ENCODE measurements at regions of chrX and their contacts with region 1.

Region 1: DNA sequence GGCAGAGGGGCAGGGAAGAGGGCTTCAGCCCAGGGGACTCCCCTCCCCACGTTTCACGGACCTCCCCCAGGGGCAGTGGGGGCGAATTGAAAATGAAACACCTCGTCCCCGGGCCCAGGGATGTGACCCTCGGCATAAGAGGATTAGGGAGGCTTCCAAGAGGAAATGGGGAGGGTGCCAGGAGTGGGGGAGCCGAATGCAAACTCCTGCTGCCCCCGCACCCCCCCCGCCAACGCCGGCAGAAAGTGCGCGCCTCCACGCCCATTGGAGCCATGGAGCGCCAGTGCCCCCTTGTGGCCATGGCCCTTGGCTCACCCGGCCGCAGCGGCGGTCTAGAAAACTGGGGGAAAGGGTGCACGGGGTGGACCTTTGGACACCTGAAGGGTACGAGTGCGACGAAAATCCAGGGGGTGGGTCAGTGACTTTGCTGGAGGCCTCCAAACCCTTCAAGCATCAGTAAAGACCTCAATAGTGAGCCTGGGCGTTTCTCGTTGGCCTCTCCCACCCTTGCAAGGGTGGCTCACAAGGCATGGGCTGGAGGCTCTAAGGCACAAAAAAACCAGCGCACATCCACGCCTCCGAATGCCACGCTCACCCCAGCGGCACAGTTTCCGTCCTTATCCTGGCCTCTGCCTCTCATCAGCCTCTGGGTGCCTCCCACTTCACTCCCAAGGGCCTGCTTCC is 120.8 kb upstream of the PJA1 start:
- DNase-seq: peak; percentile 89 to 96
- H3K4me3 ChIP-seq: peak overlapping the region; percentile 11
- H3K4me1 ChIP-seq: peaks cover 47% of the 10 kb centered on the region
- H3K27me3 ChIP-seq: no peaks in the 10 kb centered on the region

Region 2: DNA sequence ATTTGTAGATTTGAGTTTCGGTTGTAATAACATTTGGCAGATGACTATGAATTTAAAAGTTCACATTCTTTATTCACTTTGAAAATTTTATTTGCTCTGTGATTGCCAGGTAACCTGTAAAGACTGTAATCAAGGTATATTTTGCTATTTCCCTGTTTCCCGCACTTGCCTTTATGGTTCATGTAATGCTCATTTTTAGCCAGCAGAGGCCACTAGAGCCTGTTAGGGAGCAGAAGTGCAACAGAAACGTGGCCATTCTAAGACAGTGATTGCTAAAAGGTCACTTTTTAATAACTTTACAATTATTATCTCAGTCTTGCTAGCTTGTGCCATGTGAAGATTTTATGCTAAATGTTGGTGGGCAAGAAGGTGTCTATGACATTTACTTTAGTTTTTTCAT is 774.8 kb before region 1 on chrX:
- in situ Hi-C with region 1: loop called (anchors 25 kb)
- DNase-seq: peak; percentile 56 to 72
- H3K4me3 ChIP-seq: no peak overlapping the region
- H3K4me1 ChIP-seq: peaks cover 22% of the 10 kb centered on the region
- H3K27me3 ChIP-seq: no peaks in the 10 kb centered on the region